Activated CD4-positive, alpha-beta memory T cell treated with anti-CD3 and anti-CD28 coated beads for 36 hours (primary cell): ENCODE measurements at regions of chr5 and their contacts with region 1.

Region 1: DNA sequence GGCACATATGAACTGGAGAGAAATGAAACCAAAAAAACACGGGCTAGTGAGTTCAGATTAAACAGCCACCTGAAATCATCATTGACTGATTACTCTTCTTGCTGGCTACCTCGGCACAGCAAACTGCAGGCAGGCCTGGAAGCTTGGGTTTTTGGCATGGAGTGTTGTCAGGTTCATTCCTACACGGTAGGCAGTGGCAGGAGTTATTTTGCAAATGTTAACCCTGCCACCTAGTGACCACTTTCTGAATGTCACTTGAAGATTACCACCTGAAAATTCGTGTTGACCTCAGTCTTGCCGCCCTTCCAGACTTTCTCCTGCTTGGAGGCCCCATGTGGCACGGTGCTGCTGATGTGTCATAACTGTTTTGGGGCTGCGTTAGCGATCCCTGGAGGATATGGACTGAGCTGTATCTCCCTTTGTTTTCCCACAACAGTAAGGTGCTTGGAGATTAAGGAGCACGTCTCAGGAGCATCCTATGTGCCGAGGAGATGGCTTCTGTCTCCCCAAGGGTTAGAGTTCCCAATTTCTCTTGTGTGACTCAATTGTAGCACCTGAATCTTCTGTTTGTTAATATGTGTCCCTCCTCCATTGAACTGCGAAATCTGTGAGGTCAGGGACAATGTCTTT is 12.7 kb upstream of the CD180 start:
- DNase-seq: peak; percentile 67
- H3K4me3 Mint-ChIP-seq: no peak overlapping the region
- H3K27ac Mint-ChIP-seq: peak overlapping the region; percentile 46
- H3K4me1 Mint-ChIP-seq: peaks cover 57% of the 10 kb centered on the region
- H3K27me3 Mint-ChIP-seq: no peaks in the 10 kb centered on the region

Region 2: DNA sequence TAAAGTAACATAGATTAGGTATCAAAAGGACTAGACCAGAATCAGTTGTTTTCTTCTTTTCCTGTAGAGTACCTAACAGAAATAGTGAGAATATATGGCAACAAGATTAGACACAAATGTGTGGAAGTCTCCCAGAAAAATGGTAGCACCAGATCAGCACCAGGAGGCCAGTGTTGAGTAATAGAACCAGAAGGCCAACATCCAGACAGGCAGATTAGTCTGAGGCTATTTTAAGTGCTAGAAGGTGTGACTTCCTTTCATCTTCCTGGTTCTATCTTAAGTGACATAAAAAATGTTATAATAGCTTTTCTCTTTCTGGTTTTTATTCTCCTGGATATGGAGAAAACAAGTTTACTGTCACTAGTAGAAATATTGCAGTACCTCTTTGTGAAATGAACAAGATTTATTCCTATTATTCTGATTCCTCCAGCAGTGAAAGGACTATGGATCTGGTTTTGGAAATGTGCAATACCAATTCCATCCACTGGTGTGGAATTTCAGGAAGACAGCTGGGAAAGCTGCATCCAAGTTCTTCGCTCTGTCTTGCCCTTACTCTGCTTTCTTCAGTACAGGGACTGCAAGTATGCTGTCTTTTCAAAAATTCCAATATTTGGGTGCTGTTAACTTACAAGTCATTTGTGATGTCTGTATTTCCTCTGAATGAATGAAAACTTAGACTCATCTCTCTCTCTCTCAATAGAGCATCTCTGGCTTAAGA is 1545.3 kb before region 1 on chr5:
- CTCF ChIA-PET with region 1: no interaction called
- POLR2A ChIA-PET with region 1: no interaction called
- intact Hi-C with region 1: no loop called
- DNase-seq: no peak
- H3K4me3 Mint-ChIP-seq: no peak overlapping the region
- H3K27ac Mint-ChIP-seq: peak overlapping the region; percentile 42
- H3K4me1 Mint-ChIP-seq: no peaks in the 10 kb centered on the region
- H3K27me3 Mint-ChIP-seq: no peaks in the 10 kb centered on the region

Region 3: GRCh38 chr5:66144074-66144833 is 1065.0 kb before region 1 on chr5 and contains the start of gene SREK1:
- CTCF ChIA-PET with region 1: no interaction called
- POLR2A ChIA-PET with region 1: no interaction called
- intact Hi-C with region 1: loop called (anchors 10 kb)
- DNase-seq: peak; percentile 92
- H3K4me3 Mint-ChIP-seq: peak within 1 kb of the TSS; percentile 93
- H3K27ac Mint-ChIP-seq: peak within 1 kb of the TSS; percentile 98
- H3K4me1 Mint-ChIP-seq: peaks cover 51% of the 10 kb centered on the region
- H3K27me3 Mint-ChIP-seq: no peaks in the 10 kb centered on the region
- total RNA-seq, gene SREK1: 50.9 to 54.1 TPM

Region 4: GRCh38 chr5:66565878-66566277 is 643.4 kb before region 1 on chr5:
- CTCF ChIA-PET with region 1: no interaction called
- POLR2A ChIA-PET with region 1: no interaction called
- intact Hi-C with region 1: no loop called
- DNase-seq: no peak
- H3K4me3 Mint-ChIP-seq: no peak overlapping the region
- H3K27ac Mint-ChIP-seq: no peak overlapping the region
- H3K4me1 Mint-ChIP-seq: no peaks in the 10 kb centered on the region
- H3K27me3 Mint-ChIP-seq: no peaks in the 10 kb centered on the region

Region 5: GRCh38 chr5:66701244-66701643 is 508.0 kb before region 1 on chr5:
- CTCF ChIA-PET with region 1: no interaction called
- POLR2A ChIA-PET with region 1: no interaction called
- intact Hi-C with region 1: no loop called
- DNase-seq: no peak
- H3K4me3 Mint-ChIP-seq: no peak overlapping the region
- H3K27ac Mint-ChIP-seq: no peak overlapping the region
- H3K4me1 Mint-ChIP-seq: no peaks in the 10 kb centered on the region
- H3K27me3 Mint-ChIP-seq: peaks cover 15% of the 10 kb centered on the region

Region 6: DNA sequence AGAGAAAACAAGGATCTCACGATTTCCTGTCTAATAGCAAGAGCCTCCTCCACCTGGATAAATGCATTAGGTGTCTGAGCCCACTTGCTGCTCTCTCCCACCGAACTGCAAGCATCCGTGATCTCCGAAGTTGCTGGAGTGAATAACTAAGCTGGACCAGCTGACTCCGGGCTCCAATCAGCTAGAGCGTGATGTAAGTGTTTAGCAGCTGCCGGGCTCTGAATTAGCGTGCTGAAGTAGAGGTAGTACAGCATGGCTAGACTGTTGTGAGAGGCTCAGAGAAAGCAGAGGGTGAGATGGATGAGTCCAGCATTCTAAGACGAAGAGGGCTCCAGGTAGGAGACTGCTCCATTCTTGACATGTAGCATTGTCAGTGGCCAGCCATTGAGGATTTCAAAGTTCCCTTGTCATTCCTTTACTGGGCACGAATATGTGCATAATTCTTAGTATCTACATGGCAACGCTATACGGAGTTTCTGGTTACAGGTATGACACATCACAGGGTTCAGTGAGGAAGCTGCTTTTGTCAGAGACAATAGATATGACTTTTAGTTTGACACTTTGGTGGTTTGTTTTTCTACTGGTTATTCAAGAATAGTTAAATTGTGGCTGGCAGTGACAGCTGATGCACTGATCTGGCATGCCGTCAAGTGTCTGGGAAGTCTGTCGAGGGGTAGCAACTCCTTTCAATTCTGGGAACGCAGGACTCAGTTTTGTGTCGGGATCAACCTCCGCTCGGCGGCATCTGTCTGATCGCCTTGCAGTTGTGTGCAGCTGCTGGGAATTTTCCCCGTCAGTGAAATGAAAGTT is 380.5 kb before region 1 on chr5:
- CTCF ChIA-PET with region 1: interaction called, 4 read pairs
- POLR2A ChIA-PET with region 1: interaction called, 8 read pairs
- intact Hi-C with region 1: loop called (anchors 5 kb)
- DNase-seq: peak; percentile 78
- H3K4me3 Mint-ChIP-seq: peak overlapping the region; percentile 85
- H3K27ac Mint-ChIP-seq: peak overlapping the region; percentile 87
- H3K4me1 Mint-ChIP-seq: peaks cover 29% of the 10 kb centered on the region
- H3K27me3 Mint-ChIP-seq: peaks cover 15% of the 10 kb centered on the region

Region 7: GRCh38 chr5:67100301-67100700 is 109.0 kb before region 1 on chr5:
- CTCF ChIA-PET with region 1: no interaction called
- POLR2A ChIA-PET with region 1: no interaction called
- intact Hi-C with region 1: loop called (anchors 1 kb)
- DNase-seq: peak; percentile 72
- H3K4me3 Mint-ChIP-seq: peak overlapping the region; percentile 0
- H3K27ac Mint-ChIP-seq: peak overlapping the region; percentile 71
- H3K4me1 Mint-ChIP-seq: peaks cover 18% of the 10 kb centered on the region
- H3K27me3 Mint-ChIP-seq: no peaks in the 10 kb centered on the region

Region 8: GRCh38 chr5:67115246-67115645 is 94.0 kb before region 1 on chr5:
- CTCF ChIA-PET with region 1: no interaction called
- POLR2A ChIA-PET with region 1: no interaction called
- intact Hi-C with region 1: no loop called
- DNase-seq: no peak
- H3K4me3 Mint-ChIP-seq: no peak overlapping the region
- H3K27ac Mint-ChIP-seq: no peak overlapping the region
- H3K4me1 Mint-ChIP-seq: no peaks in the 10 kb centered on the region
- H3K27me3 Mint-ChIP-seq: no peaks in the 10 kb centered on the region

Region 9: DNA sequence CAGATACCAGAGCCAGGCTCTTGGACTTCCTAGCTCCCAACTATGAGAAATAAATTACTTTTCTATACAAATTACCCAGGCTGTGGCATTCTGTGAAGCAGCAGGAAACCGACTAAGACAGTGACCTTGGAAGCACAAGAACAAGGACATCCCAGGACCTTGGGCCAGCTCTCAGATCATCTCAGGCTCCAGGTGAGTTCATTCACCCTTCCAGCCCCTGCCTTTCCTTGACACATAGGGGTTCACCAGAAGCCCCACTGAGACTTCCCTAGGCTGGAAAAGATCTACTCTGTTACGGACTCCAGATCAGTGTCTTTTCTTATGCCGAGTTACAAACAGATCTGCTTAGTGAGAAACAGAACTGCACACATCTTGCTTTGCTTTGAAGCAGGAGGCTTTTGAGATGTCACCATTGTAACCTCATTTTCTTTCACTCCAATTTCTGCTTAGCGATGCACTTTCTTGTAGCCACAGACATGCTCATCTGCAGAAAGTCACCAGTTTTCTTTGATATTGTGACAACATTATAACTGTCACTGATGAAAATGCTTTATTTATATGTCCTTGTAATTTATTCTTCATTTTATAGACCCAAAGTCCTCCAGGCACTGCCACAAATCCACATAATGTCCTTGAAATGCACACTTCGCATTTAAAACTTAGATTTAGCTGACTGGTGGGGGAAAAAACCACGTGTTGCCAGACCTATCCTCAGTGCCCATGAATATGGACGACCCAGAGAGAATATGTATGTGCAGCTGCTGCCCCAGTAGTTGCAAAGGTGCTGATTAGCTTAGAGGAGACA is 20.8 kb before region 1 on chr5:
- CTCF ChIA-PET with region 1: interaction called, 3 read pairs
- POLR2A ChIA-PET with region 1: interaction called, 4 read pairs
- intact Hi-C with region 1: loop called (anchors 1 kb)
- DNase-seq: no peak
- H3K4me3 Mint-ChIP-seq: peak overlapping the region; percentile 30
- H3K27ac Mint-ChIP-seq: peak overlapping the region; percentile 82
- H3K4me1 Mint-ChIP-seq: peaks cover 32% of the 10 kb centered on the region
- H3K27me3 Mint-ChIP-seq: no peaks in the 10 kb centered on the region

Region 10: DNA sequence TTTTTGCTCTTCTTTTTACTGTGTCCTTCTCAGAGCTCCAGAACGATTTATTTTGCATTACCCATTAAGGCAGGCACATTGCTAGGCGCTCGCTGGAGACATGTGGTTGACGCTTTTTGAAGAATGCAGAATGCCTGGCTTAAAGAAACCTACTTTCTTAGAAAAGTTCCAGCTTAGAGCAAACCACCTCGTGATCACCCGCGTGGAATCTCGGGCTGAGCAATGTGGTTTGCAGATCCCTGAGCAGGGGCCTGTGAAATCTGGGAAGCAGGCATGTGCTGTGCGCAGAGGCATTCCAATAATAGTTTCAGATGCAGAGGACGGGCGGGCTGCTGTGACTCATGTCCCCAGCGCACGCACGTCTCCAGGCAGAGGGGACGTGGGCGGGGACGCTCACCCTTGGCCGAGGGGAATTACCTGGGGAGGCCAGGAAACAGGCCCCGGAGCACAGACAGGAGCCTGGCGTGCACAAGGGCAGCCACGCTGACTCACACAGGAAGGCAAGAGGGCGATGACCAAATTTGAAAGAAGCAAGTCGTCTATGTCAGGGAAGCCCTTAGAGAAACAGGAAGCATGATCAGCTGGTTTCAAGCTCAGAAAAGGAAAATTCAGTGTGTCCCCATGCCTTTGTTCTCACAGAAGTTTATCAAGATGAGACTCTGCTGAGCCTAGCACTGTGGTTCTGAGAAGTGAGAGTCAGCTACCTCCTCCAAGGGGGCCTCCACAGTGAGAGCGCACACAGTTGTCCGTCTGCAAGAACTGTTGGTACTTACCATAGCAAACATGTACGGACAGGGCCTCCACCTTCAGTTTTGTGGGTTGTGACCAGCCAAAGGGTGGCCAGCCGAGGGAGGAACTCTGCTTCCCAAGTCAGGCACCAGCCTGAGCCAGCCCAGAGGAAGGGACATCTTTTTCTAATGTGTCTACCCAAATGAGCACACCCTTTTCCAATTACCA is 1224.9 kb after region 1 on chr5:
- CTCF ChIA-PET with region 1: no interaction called
- POLR2A ChIA-PET with region 1: no interaction called
- intact Hi-C with region 1: loop called (anchors 10 kb)
- DNase-seq: peak; percentile 98
- H3K4me3 Mint-ChIP-seq: peak overlapping the region; percentile 42
- H3K27ac Mint-ChIP-seq: peak overlapping the region; percentile 77
- H3K4me1 Mint-ChIP-seq: peaks cover 53% of the 10 kb centered on the region
- H3K27me3 Mint-ChIP-seq: peaks cover 2% of the 10 kb centered on the region